ENCODE measurements at regions of chr2 and their contacts with region 1.

Region 1: DNA sequence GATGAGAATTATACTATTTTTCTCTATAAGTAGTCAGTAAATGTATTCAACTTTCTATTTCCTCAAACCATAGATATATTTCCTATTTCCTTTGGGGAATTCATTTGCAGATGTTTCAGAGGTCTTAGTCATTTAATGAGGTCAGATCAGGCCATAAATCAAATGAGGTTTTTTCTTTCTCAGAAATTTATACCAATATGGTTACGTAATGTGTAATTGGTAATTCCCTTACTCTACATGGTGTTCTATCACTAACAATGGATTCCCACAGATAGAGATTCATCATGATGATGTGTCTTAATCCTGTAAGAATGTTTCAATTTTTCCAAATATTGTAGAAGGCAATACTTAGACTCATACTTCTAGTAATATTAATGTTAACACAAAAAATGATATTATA is 108.0 kb downstream of the DPP4 start:
- DNase-seq: no peak
- H3K4me3 Mint-ChIP-seq: no peak overlapping the region
- H3K27ac Mint-ChIP-seq: no peak overlapping the region
- H3K4me1 Mint-ChIP-seq: peaks cover 39% of the 10 kb centered on the region
- H3K27me3 Mint-ChIP-seq: no peaks in the 10 kb centered on the region

Region 2: GRCh38 chr2:161725297-161725696 is 240.7 kb before region 1 on chr2:
- intact Hi-C with region 1: no loop called
- DNase-seq: no peak
- H3K4me3 Mint-ChIP-seq: no peak overlapping the region
- H3K27ac Mint-ChIP-seq: no peak overlapping the region
- H3K4me1 Mint-ChIP-seq: no peaks in the 10 kb centered on the region
- H3K27me3 Mint-ChIP-seq: peaks cover 28% of the 10 kb centered on the region

Region 3: GRCh38 chr2:161981679-161982250 is 15.8 kb after region 1 on chr2:
- intact Hi-C with region 1: loop called (anchors 2 kb)
- DNase-seq: no peak
- H3K4me3 Mint-ChIP-seq: no peak overlapping the region
- H3K27ac Mint-ChIP-seq: peak overlapping the region; percentile 78
- H3K4me1 Mint-ChIP-seq: peaks cover 46% of the 10 kb centered on the region
- H3K27me3 Mint-ChIP-seq: no peaks in the 10 kb centered on the region

Region 4: DNA sequence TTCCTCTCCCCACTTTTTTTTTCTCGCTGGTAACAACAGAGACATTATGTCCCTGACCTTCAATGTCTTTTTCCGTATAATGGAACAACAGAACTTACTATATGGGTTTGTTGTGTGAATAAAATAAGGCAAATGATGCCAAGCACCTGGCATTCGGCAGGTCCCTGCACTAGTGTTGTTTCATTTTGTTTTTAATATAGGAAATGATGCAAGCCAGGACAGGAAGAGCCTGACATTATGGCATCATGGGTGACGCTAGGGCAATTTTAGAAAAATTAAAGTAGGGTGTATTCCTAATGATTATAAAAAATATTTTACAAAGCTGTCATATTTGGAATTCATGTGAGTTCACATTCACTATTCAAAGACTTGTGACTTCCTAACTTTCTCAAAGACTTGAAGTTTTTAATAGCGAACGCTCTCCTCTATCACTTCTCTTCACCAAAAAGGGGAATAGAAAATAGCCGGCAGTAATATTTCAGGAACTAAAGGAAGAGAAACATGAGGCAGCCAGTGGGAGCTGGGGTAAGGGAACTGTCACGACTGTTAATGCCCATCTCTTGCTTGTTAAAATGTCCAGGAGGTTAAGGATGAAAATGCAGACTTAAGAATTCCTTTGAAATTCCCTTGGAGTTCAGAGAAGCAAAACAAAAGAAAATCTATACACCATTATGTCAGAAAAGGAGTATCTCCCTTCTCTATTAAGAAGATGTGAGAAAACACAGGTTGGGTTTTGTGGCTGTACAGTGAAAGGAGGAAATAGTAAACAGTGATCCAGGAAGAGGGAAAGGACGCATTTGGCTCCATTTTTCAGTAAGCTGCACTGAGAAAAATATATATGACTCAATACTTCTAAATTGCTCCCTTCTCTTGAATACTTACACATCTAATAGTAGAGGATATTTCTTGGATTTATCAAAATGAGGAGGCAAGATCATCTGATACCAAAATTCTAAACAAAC is 47.8 kb after region 1 on chr2:
- intact Hi-C with region 1: loop called (anchors 2 kb)
- DNase-seq: peak; percentile 66
- H3K4me3 Mint-ChIP-seq: peak overlapping the region; percentile 78
- H3K27ac Mint-ChIP-seq: peak overlapping the region; percentile 95
- H3K4me1 Mint-ChIP-seq: peaks cover 73% of the 10 kb centered on the region
- H3K27me3 Mint-ChIP-seq: no peaks in the 10 kb centered on the region

Region 5: GRCh38 chr2:162212366-162212765 is 246.4 kb after region 1 on chr2:
- intact Hi-C with region 1: no loop called
- DNase-seq: no peak
- H3K4me3 Mint-ChIP-seq: no peak overlapping the region
- H3K27ac Mint-ChIP-seq: no peak overlapping the region
- H3K4me1 Mint-ChIP-seq: no peaks in the 10 kb centered on the region
- H3K27me3 Mint-ChIP-seq: peaks cover 28% of the 10 kb centered on the region